CD4-positive, alpha-beta memory T cell (primary cell): ENCODE measurements at regions of chr11 and their contacts with region 1.

Region 1: GRCh38 chr11:134068829-134069425 is at the start of gene JAM3:
- DNase-seq: peak; percentile 96 to 98 (median 97)
- H3K4me3 ChIP-seq: peak within 1 kb of the TSS in 1 of 2 donors; percentile 48
- H3K4me3 Mint-ChIP-seq: peak within 1 kb of the TSS; percentile 87 to 95 (median 92)
- H3K27ac ChIP-seq: no peak within 1 kb of the TSS
- H3K27ac Mint-ChIP-seq: peak within 1 kb of the TSS; percentile 72 to 98 (median 97)
- H3K4me1 ChIP-seq: peaks cover 7% of the 10 kb centered on the region
- H3K4me1 Mint-ChIP-seq: peaks cover 5 to 14% (median 9%) of the 10 kb centered on the region in 4 donors
- H3K27me3 ChIP-seq: no peaks in the 10 kb centered on the region
- H3K27me3 Mint-ChIP-seq: peaks cover 2 to 5% of the 10 kb centered on the region in 2 donors
- total RNA-seq, gene JAM3: 6.8 to 8.3 TPM

Region 2: DNA sequence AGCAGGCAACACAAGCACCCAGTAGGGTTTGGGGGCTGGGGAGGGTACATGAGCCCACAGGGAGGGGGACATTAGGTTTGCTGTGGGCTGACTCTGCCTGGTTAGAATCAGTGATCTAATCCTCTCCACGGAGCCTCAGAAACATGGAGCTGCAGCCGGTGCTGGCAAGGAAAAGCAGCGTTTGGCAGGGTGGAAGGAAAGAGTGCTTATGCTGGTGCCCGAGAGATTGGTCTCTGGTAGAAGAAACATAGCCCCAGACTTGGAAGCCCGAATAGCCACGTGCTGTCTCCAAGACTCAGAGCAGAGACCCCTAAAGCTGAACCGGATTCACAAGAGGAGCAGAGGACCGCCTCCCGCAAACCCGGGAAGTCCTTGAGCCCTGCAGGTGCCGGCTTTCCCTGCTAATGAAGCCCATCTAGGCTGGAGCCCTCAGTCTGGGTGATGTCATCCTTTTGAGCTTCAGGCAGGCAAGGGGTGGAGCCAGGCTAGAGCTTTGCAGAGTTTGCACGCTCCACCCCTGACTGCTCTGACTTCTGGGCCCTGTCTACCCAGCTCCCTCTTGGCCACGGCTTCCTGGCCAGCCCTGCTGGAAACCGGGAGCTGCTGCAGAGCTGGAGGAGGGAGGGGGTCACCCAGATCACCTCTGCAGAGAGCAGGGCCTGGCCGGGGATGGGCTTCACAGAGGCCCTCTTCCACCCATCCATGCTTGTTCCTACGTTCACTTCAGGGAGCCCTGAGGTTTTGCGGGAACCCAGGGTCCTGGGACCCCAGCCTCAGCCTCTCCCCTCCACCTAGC is 35.0 kb before region 1 on chr11:
- CTCF ChIA-PET with region 1: no interaction called
- POLR2A ChIA-PET with region 1: interaction called, 10 read pairs
- intact Hi-C with region 1: loop called (anchors 2 kb)
- DNase-seq: peak; percentile 36 to 75 (median 50)
- H3K4me3 ChIP-seq: peak overlapping the region in 1 of 2 donors; percentile 29
- H3K4me3 Mint-ChIP-seq: peak overlapping the region in 7 of 8 donors; percentile 57 to 87 (median 70)
- H3K27ac ChIP-seq: peak overlapping the region; percentile 5
- H3K27ac Mint-ChIP-seq: peak overlapping the region; percentile 59 to 87 (median 67)
- H3K4me1 ChIP-seq: peaks cover 50% of the 10 kb centered on the region
- H3K4me1 Mint-ChIP-seq: peaks cover 27 to 70% (median 45%) of the 10 kb centered on the region in 4 donors
- H3K27me3 ChIP-seq: no peaks in the 10 kb centered on the region
- H3K27me3 Mint-ChIP-seq: no peaks in the 10 kb centered on the region